CD4-positive, alpha-beta memory T cell (primary cell): ENCODE measurements at regions of chr1 and their contacts with region 1.

Region 1: GRCh38 chr1:111481387-111482221 is 7.8 kb downstream of the C1orf162 start:
- DNase-seq: peak in 4 of 5 donors; percentile 41 to 54 (median 52)
- H3K4me3 ChIP-seq: no peak overlapping the region
- H3K4me3 Mint-ChIP-seq: no peak overlapping the region
- H3K27ac ChIP-seq: no peak overlapping the region
- H3K27ac Mint-ChIP-seq: peak overlapping the region in 3 of 7 donors; percentile 11 to 80 (median 47)
- H3K4me1 ChIP-seq: peaks cover 29% of the 10 kb centered on the region
- H3K4me1 Mint-ChIP-seq: peaks cover 31 to 55% (median 44%) of the 10 kb centered on the region in 4 donors
- H3K27me3 ChIP-seq: no peaks in the 10 kb centered on the region
- H3K27me3 Mint-ChIP-seq: no peaks in the 10 kb centered on the region

Region 2: DNA sequence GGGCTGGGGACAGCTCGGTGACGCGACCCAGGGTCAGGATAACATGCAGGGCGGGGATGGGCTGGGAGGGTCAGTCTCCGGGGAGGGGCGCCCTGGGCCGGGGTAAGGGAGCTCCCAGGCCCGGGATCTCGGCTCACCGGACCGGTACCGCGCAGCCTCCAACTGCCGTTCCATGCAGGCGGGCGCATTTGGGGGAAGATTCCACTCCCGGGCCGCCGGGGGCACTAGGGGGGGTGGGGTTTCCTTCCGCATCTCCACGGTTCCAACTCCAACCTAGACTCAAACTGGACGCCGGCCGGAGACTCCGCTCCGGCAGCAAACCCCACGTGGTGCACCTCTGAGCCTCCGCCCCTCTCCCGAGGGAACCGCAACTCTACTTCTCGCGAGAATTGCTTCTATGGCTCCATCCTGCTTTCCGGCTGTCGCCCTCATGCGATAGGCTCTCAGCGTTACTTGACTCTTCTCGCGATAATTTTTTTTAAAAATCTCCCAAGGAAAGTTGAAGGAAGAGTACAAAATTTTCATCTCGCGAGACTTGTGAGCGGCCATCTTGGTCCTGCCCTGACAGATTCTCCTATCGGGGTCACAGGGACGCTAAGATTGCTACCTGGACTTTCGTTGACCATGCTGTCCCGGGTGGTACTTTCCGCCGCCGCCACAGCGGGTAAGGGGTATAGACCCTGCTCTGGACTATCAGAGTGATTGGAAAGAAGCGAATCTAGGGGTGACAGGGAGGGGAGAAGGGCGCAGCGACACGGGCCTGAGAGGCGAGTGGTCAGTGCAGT is 32.5 kb before region 1 on chr1 and contains the starts of genes ATP5PB and WDR77:
- CTCF ChIA-PET with region 1: interaction called, 12 read pairs
- POLR2A ChIA-PET with region 1: interaction called, 164 read pairs
- intact Hi-C with region 1: no loop called
- DNase-seq: peak; percentile 94 to 97 (median 96)
- H3K4me3 ChIP-seq: peak within 1 kb of the TSS; percentile 78 to 96
- H3K4me3 Mint-ChIP-seq: peak within 1 kb of the TSS; percentile 98 to 100 (median 99)
- H3K27ac ChIP-seq: peak within 1 kb of the TSS; percentile 91
- H3K27ac Mint-ChIP-seq: peak within 1 kb of the TSS; percentile 94 to 100 (median 99)
- H3K4me1 ChIP-seq: peaks cover 77% of the 10 kb centered on the region
- H3K4me1 Mint-ChIP-seq: peaks cover 57 to 87% (median 71%) of the 10 kb centered on the region in 4 donors
- H3K27me3 ChIP-seq: no peaks in the 10 kb centered on the region
- H3K27me3 Mint-ChIP-seq: no peaks in the 10 kb centered on the region
- total RNA-seq, gene ATP5PB: 103 to 112 TPM
- total RNA-seq, gene WDR77: 26.3 to 30.3 TPM

Region 3: GRCh38 chr1:111497592-111497991 is 16.0 kb after region 1 on chr1:
- CTCF ChIA-PET with region 1: interaction called, 28 read pairs
- POLR2A ChIA-PET with region 1: interaction called, 170 read pairs
- intact Hi-C with region 1: no loop called
- DNase-seq: no peak
- H3K4me3 ChIP-seq: no peak overlapping the region
- H3K4me3 Mint-ChIP-seq: peak overlapping the region in 1 of 8 donors; percentile 33
- H3K27ac ChIP-seq: no peak overlapping the region
- H3K27ac Mint-ChIP-seq: peak overlapping the region in 3 of 7 donors; percentile 23 to 66 (median 60)
- H3K4me1 ChIP-seq: peaks cover 13% of the 10 kb centered on the region
- H3K4me1 Mint-ChIP-seq: peaks cover 13 to 40% (median 27%) of the 10 kb centered on the region in 4 donors
- H3K27me3 ChIP-seq: no peaks in the 10 kb centered on the region
- H3K27me3 Mint-ChIP-seq: no peaks in the 10 kb centered on the region

Region 4: GRCh38 chr1:111619635-111620440 is 138.2 kb after region 1 on chr1 and contains the start of gene RAP1A:
- CTCF ChIA-PET with region 1: interaction called, 3 read pairs
- POLR2A ChIA-PET with region 1: interaction called, 14 read pairs
- intact Hi-C with region 1: no loop called
- DNase-seq: peak; percentile 88 to 91 (median 88)
- H3K4me3 ChIP-seq: peak within 1 kb of the TSS; percentile 79 to 90
- H3K4me3 Mint-ChIP-seq: peak within 1 kb of the TSS; percentile 95 to 100 (median 98)
- H3K27ac ChIP-seq: peak within 1 kb of the TSS; percentile 84
- H3K27ac Mint-ChIP-seq: peak within 1 kb of the TSS; percentile 93 to 98 (median 97)
- H3K4me1 ChIP-seq: peaks cover 81% of the 10 kb centered on the region
- H3K4me1 Mint-ChIP-seq: peaks cover 59 to 83% (median 71%) of the 10 kb centered on the region in 4 donors
- H3K27me3 ChIP-seq: no peaks in the 10 kb centered on the region
- H3K27me3 Mint-ChIP-seq: no peaks in the 10 kb centered on the region
- total RNA-seq, gene RAP1A: 130 to 134 TPM

Region 5: GRCh38 chr1:111690306-111690617 is 208.7 kb after region 1 on chr1:
- CTCF ChIA-PET with region 1: no interaction called
- POLR2A ChIA-PET with region 1: no interaction called
- intact Hi-C with region 1: no loop called
- DNase-seq: no peak
- H3K4me3 ChIP-seq: no peak overlapping the region
- H3K4me3 Mint-ChIP-seq: peak overlapping the region in 2 of 8 donors; percentile 4 to 61
- H3K27ac ChIP-seq: no peak overlapping the region
- H3K27ac Mint-ChIP-seq: peak overlapping the region; percentile 2 to 76 (median 32)
- H3K4me1 ChIP-seq: peaks cover 54% of the 10 kb centered on the region
- H3K4me1 Mint-ChIP-seq: peaks cover 46 to 78% (median 67%) of the 10 kb centered on the region in 4 donors
- H3K27me3 ChIP-seq: no peaks in the 10 kb centered on the region
- H3K27me3 Mint-ChIP-seq: no peaks in the 10 kb centered on the region

Region 6: DNA sequence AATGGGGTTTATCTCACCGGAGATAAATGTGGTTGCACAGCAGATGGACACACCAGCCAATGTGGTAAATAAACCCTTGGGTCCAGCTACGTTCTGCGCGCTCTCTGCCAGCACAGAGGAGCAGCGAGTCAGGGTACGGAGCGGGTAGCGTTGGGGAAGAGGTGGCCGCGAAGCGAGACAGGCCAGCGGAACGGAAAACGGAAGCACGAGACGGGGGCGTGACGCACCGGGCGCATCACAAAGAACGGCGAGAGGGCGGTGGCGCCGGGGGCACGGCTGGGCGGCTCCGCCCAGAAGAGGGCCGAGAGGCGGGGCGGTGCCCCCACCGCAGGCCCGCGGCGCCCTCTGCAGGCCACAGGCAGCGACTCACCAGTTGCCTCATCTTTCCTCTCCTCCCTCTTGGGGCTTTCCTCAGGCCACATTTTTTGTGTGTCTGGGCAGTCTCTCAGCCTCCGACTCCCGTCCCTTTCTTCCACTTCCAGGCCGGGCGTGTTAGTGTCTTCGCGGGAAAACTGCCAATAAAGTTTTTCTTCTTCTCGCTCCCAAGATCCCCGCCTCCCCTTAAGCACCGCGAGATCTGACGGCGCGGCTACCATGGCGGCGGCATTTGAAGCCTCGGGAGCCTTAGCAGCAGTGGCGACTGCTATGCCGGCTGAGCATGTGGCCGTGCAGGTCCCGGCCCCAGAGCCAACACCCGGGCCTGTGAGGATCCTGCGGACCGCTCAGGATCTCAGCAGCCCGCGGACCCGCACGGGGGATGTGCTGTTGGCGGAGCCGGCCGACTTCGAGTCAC is 273.9 kb after region 1 on chr1 and contains the start of gene DDX20:
- CTCF ChIA-PET with region 1: interaction called, 7 read pairs
- POLR2A ChIA-PET with region 1: interaction called, 12 read pairs
- intact Hi-C with region 1: no loop called
- DNase-seq: peak; percentile 94 to 96 (median 95)
- H3K4me3 ChIP-seq: peak within 1 kb of the TSS; percentile 63 to 92
- H3K4me3 Mint-ChIP-seq: peak within 1 kb of the TSS; percentile 90 to 100 (median 98)
- H3K27ac ChIP-seq: peak within 1 kb of the TSS; percentile 93
- H3K27ac Mint-ChIP-seq: peak within 1 kb of the TSS; percentile 97 to 100 (median 99)
- H3K4me1 ChIP-seq: peaks cover 20% of the 10 kb centered on the region
- H3K4me1 Mint-ChIP-seq: peaks cover 26 to 36% (median 33%) of the 10 kb centered on the region in 4 donors
- H3K27me3 ChIP-seq: no peaks in the 10 kb centered on the region
- H3K27me3 Mint-ChIP-seq: peaks cover 0 to 2% of the 10 kb centered on the region in 2 donors
- total RNA-seq, gene DDX20: 22.2 to 26.0 TPM